ENCODE measurements at regions of chr3 and their contacts with region 1.

Region 1: GRCh38 chr3:99466331-99466730 is 172.1 kb upstream of the COL8A1 start:
- DNase-seq: no peak
- H3K4me3 ChIP-seq: no peak overlapping the region
- H3K27ac ChIP-seq: no peak overlapping the region
- H3K4me1 ChIP-seq: no peaks in the 10 kb centered on the region
- H3K27me3 ChIP-seq: no peaks in the 10 kb centered on the region
- CTCF ChIP-seq: no peak
- POLR2A ChIP-seq: no peak

Region 2: GRCh38 chr3:99400352-99400751 is 66.0 kb before region 1 on chr3:
- intact Hi-C with region 1: loop called (anchors 2 kb)
- DNase-seq: no peak
- H3K4me3 ChIP-seq: no peak overlapping the region
- H3K27ac ChIP-seq: no peak overlapping the region
- H3K4me1 ChIP-seq: no peaks in the 10 kb centered on the region
- H3K27me3 ChIP-seq: no peaks in the 10 kb centered on the region
- CTCF ChIP-seq: no peak
- POLR2A ChIP-seq: no peak

Region 3: DNA sequence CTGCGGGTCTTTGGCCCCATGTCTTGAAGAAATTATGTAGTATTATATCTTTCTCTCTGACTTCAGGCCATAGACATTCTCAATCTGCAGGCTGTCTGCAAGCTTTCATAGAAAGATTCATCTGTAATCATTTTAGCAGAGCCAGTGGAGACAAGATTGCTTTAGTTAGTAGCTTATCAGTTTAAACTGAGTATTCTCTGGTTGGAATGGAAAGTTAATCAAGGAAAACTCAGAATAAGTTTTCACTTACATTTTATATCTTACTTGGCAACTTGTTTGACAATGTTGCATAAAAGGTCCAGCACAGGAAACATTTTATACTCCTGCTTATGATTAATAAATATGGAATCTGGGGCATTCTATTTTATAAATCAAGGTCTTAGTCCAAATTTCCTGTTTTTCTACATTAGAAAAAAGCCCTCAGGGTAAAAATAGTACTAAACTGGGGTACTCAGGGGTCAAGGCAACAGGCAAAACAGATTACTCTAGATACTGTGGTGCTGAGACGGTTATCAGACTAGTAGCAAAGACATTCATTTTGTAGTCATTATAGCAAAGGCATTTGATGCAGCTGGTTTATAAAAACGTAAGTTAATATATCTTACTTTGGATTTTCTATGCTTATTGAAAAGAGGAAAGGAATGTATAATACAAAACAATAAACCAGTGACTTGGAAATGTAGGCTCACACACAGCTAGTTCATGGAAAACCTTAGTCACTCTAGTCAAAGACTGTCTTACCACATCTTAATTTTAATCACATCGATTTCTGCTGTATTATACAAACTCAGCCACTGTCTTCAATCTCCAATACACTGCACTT is 693.2 kb after region 1 on chr3:
- intact Hi-C with region 1: no loop called
- DNase-seq: no peak
- H3K4me3 ChIP-seq: no peak overlapping the region
- H3K27ac ChIP-seq: peak overlapping the region in 7 of 8 donors; percentile 48 to 75 (median 64)
- H3K4me1 ChIP-seq: peaks cover 0 to 37% (median 13%) of the 10 kb centered on the region in 6 donors
- H3K27me3 ChIP-seq: no peaks in the 10 kb centered on the region
- CTCF ChIP-seq: no peak
- POLR2A ChIP-seq: no peak

Measured in spleen (tissue), 13 donors.